ENCODE measurements at regions of chr16 and their contacts with region 1.

Region 1: DNA sequence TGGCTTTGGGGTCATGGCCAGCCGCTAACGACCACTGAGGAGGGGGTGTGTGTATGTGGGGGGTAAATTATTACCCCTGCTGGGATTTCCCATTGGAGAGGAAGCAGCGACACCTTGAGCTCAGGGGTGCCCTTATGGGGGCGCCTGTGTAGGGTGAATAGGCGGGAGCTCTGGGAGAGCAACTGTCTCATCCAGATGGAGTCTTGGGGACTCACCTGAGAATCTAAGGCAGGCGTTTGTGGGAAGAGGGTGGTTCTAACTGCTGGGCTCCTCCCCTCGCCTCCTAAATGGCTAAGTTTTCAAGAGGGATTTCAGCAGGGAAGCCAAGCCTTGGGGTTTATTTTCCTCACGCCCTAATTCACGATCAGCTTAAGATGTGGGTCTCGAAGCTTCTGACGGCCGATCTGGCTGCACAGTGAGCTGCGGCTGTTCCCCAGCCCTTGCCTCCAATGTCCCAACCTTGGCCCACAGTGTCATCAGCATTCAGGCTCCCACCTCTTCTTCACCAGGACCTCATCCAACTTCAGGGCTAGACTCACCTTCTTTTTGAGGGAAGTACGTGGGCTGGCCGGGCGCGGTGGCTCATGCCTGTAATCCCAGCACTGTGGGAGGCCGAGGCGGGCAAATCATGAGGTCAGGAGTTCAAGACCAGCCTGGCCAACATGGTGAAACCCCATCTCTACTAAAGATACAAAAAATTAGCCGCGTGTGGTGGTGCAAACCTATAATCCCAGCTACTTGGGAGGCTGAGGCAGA is 136.9 kb upstream of the EEF2KMT start:
- DNase-seq: no peak
- ATAC-seq: no peak
- H3K4me3 Mint-ChIP-seq: no peak overlapping the region
- H3K27ac Mint-ChIP-seq: no peak overlapping the region
- H3K4me1 Mint-ChIP-seq: peaks cover 3% of the 10 kb centered on the region
- H3K27me3 Mint-ChIP-seq: peaks cover 25% of the 10 kb centered on the region

Region 2: DNA sequence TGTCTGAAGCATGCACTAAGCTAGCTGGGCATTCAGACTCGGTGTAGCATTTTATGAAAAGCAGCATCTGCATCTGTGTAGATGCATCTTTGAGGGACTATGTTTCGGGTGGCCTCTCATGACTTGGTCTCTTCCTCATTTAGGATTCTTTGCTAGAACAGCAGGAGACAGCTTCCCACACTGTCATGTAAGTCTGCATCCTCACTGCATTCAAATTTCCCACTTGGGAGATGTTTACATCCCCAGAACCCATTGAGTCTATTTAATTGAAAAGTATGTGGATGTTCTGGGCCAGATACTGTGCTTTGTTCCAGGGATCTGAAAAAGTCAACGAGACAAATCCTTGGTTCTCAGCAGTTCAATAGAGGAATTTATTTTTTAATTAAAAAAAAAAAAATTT is 61.7 kb after region 1 on chr16:
- CTCF ChIA-PET with region 1: no interaction called
- POLR2A ChIA-PET with region 1: no interaction called
- intact Hi-C with region 1: no loop called
- DNase-seq: no peak
- ATAC-seq: no peak
- H3K4me3 Mint-ChIP-seq: no peak overlapping the region
- H3K27ac Mint-ChIP-seq: no peak overlapping the region
- H3K4me1 Mint-ChIP-seq: no peaks in the 10 kb centered on the region
- H3K27me3 Mint-ChIP-seq: peaks cover 6% of the 10 kb centered on the region

Region 3: DNA sequence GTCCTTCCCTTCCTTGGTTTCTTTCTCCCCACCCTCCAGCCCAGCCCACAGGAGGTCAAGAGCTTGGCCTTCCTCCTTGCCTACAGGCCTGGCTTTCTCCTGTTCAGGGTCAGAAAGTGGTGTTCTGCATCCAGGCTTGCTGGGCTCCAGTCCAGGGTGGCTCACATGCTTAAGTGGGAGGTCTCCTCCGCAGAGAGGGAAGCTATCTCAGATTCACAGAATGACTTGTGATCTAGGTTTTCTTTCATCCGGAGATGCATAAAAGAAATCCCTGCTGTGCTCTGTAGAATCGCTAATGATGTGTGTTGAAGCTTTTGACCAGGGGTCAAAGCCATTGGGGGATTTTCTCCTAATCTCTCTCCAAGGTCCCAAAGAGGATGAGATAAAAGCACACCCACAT is 245.5 kb after region 1 on chr16:
- CTCF ChIA-PET with region 1: interaction called, 3 read pairs
- POLR2A ChIA-PET with region 1: no interaction called
- intact Hi-C with region 1: loop called in 1 of 2 experiments (anchors 10 kb)
- DNase-seq: no peak
- ATAC-seq: no peak
- H3K4me3 Mint-ChIP-seq: no peak overlapping the region
- H3K27ac Mint-ChIP-seq: no peak overlapping the region
- H3K4me1 Mint-ChIP-seq: no peaks in the 10 kb centered on the region
- H3K27me3 Mint-ChIP-seq: peaks cover 7% of the 10 kb centered on the region

Region 4: DNA sequence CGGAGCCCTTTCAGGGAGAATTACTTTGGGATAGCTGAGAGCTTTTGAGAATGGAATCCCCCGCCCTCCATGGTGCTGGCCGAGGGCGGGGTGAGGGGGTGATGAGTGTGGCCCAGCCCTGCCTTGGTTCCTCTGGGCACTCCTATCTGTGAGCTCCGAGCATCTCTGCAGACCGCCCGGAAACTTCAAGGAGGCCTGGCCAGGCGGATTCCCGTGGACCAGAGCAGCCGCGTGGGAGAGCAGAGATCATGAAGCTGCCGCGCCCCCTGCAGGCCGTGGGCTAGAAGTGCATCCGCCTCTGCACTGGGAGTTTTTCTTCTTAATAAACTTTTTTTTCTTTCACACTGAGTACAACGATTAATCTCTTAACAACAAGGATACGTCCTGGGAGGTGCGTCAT is 256.0 kb after region 1 on chr16:
- CTCF ChIA-PET with region 1: no interaction called
- POLR2A ChIA-PET with region 1: no interaction called
- intact Hi-C with region 1: loop called (anchors 1 to 10 kb)
- DNase-seq: peak; percentile 66
- ATAC-seq: no peak
- H3K4me3 Mint-ChIP-seq: no peak overlapping the region
- H3K27ac Mint-ChIP-seq: no peak overlapping the region
- H3K4me1 Mint-ChIP-seq: no peaks in the 10 kb centered on the region
- H3K27me3 Mint-ChIP-seq: peaks cover 4% of the 10 kb centered on the region

Region 5: GRCh38 chr16:5604770-5605169 is 370.3 kb after region 1 on chr16:
- CTCF ChIA-PET with region 1: no interaction called
- POLR2A ChIA-PET with region 1: no interaction called
- intact Hi-C with region 1: loop called in 1 of 2 experiments (anchors 10 kb)
- DNase-seq: peak; percentile 35
- ATAC-seq: peak; percentile 36
- H3K4me3 Mint-ChIP-seq: no peak overlapping the region
- H3K27ac Mint-ChIP-seq: no peak overlapping the region
- H3K4me1 Mint-ChIP-seq: no peaks in the 10 kb centered on the region
- H3K27me3 Mint-ChIP-seq: no peaks in the 10 kb centered on the region

Region 6: GRCh38 chr16:5615868-5616642 is 381.6 kb after region 1 on chr16:
- CTCF ChIA-PET with region 1: interaction called, 4 read pairs
- POLR2A ChIA-PET with region 1: no interaction called
- intact Hi-C with region 1: loop called in 1 of 2 experiments (anchors 1 kb)
- DNase-seq: peak; percentile 68
- ATAC-seq: peak; percentile 60
- H3K4me3 Mint-ChIP-seq: no peak overlapping the region
- H3K27ac Mint-ChIP-seq: no peak overlapping the region
- H3K4me1 Mint-ChIP-seq: no peaks in the 10 kb centered on the region
- H3K27me3 Mint-ChIP-seq: peaks cover 21% of the 10 kb centered on the region